Activated T-helper 1 cell treated with anti-CD3 and anti-CD28 coated beads, Interleukin-12 subunit alpha, Interleukin-12 subunit beta, Interleukin-2, Interleukin-4 antibody, amounts not matched to agents 30 ng/mL and 10 ng/mL and 1 ng/mL, durations not matched to agents 14 hours and 24 hours and 36 hours (primary cell): ENCODE measurements at regions of chr22 and their contacts with region 1.

Region 1: GRCh38 chr22:19891317-19892256 is 36.9 kb upstream of the GNB1L start:
- DNase-seq: peak; percentile 58
- H3K4me3 Mint-ChIP-seq: peak overlapping the region; percentile 77
- H3K27ac Mint-ChIP-seq: peak overlapping the region; percentile 95
- H3K4me1 Mint-ChIP-seq: peaks cover 45% of the 10 kb centered on the region
- H3K27me3 Mint-ChIP-seq: no peaks in the 10 kb centered on the region

Region 2: GRCh38 chr22:19143967-19144400 is 747.6 kb before region 1 on chr22:
- intact Hi-C with region 1: loop called (anchors 5 kb)
- DNase-seq: peak; percentile 40
- H3K4me3 Mint-ChIP-seq: peak overlapping the region; percentile 98
- H3K27ac Mint-ChIP-seq: peak overlapping the region; percentile 97
- H3K4me1 Mint-ChIP-seq: peaks cover 23% of the 10 kb centered on the region
- H3K27me3 Mint-ChIP-seq: peaks cover 22% of the 10 kb centered on the region

Region 3: DNA sequence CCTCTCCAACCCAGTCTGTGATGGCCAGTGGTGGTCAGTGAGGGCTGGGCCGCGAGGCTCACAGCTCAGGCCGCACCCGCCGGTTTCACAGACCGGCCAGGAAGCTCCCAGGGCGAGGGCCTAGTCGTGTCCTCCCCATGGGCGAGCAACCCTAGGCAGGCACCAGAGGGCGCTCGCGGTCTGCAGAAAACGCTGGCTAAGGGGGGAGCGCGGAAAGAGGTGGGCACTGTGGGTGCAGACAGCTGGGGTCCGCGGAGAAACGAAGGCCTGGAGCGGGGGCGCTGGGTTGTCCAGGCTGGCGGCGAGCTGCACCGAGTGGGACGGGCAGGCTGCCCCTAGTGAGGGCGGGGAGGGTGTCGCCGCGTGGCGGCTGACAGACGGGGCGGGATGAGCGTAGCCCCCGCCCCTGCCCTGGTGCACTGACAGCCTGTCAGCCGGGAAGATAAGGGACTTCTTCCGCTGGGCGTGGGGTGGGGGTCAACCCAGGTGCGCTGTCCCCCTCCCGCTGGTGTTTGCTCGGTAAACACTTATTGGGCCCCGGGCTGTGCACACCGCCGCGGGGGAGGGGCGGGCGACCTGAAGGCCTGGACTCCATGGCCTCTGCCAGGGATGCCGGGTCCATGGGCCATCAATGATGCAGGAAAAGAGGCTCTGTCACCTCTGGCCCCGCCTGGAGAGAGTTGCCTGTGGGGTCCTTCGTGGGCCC is 160.8 kb before region 1 on chr22:
- intact Hi-C with region 1: loop called (anchors 5 kb)
- DNase-seq: peak; percentile 65
- H3K4me3 Mint-ChIP-seq: peak overlapping the region; percentile 43
- H3K27ac Mint-ChIP-seq: no peak overlapping the region
- H3K4me1 Mint-ChIP-seq: no peaks in the 10 kb centered on the region
- H3K27me3 Mint-ChIP-seq: no peaks in the 10 kb centered on the region

Region 4: DNA sequence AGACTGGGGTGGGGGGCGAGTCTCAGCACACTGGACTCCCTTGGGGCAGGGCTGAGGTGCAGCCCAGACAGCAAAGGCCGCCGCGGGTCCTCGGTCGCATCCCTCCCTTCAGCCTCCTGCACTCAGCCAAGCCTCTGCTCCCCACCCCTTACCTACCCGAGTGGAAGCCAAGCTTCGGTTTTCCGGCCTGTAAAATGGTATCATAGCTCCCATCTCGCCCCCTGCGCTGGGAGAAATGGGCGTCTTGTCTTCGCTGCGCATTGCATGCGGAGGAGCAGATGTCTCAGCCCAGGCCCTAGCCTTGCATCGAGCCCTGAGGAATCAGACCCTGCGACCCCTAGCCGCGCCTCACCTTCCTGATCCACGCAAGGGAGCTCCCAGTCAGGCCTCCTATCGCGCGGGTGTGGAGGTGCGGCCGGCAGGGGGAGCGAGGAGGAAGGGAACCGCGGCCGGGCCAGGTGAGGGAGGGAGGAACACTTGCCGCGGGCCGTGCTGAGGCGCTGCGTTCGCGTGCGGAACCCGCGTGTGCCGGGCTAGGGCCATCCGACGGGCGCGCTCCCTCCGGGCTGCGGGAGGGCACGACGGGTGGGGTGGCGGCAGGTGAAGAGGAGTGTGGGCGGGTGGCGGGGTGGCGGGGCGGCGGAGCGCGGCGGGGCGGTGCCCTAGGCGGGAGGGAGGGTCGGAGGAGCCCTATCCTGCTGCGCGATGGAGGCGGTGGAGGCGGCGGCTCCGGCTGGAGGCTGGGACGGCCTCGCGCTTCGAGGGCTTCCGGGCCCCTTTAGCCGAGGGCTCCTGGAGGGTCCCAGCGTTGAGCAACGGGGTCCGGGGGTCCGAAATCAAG is 135.1 kb before region 1 on chr22:
- intact Hi-C with region 1: loop called (anchors 5 kb)
- DNase-seq: peak; percentile 61
- H3K4me3 Mint-ChIP-seq: peak overlapping the region; percentile 2
- H3K27ac Mint-ChIP-seq: no peak overlapping the region
- H3K4me1 Mint-ChIP-seq: peaks cover 17% of the 10 kb centered on the region
- H3K27me3 Mint-ChIP-seq: peaks cover 56% of the 10 kb centered on the region

Region 5: DNA sequence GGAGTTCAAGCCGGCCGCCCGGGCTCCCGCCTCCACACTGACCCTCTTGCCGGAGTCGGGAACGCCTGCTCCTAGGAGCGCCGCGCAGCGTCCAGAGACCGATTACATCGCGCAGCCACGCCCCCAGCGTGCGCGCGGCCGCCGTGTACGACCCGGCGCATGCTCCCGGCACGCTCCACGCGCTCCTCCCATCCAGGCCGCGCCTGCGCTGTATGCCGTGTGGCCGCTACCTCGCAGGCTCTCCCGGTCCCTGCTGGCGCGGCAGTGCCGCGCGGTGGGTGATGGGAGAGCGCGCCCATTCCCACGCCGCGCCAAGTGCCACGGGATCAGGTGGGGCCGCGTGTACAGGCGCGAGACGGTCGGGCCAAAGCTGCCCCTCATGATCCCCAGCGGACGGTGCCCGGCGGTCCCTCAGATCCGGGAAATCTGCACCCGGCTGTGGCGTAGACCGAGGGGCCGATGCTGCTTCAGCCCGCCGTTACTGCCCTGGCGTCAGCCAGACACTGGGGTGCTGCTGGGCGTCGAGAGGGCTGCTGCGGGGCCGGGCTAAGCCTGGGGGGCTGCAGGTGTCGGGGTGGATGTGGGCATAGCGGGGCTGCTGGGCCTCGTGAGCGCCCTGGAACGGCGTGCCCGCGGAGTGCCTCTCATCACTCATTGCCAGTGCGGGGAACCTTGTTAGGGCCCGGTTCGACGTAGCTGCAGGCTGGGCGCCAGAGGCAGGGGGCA is 36.6 kb before region 1 on chr22 and contains the starts of genes GNB1L and RTL10:
- intact Hi-C with region 1: loop called (anchors 1 kb)
- DNase-seq: peak; percentile 97
- H3K4me3 Mint-ChIP-seq: peak within 1 kb of the TSS; percentile 98
- H3K27ac Mint-ChIP-seq: peak within 1 kb of the TSS; percentile 91
- H3K4me1 Mint-ChIP-seq: peaks cover 40% of the 10 kb centered on the region
- H3K27me3 Mint-ChIP-seq: no peaks in the 10 kb centered on the region
- total RNA-seq, gene GNB1L: 20.6 and 21.5 TPM in 2 replicates
- total RNA-seq, gene RTL10: 22.2 and 24.1 TPM in 2 replicates

Region 6: GRCh38 chr22:19909350-19910179 is 18.0 kb after region 1 on chr22:
- intact Hi-C with region 1: loop called (anchors 1 kb)
- DNase-seq: peak; percentile 62
- H3K4me3 Mint-ChIP-seq: no peak overlapping the region
- H3K27ac Mint-ChIP-seq: peak overlapping the region; percentile 20
- H3K4me1 Mint-ChIP-seq: peaks cover 6% of the 10 kb centered on the region
- H3K27me3 Mint-ChIP-seq: no peaks in the 10 kb centered on the region

Region 7: DNA sequence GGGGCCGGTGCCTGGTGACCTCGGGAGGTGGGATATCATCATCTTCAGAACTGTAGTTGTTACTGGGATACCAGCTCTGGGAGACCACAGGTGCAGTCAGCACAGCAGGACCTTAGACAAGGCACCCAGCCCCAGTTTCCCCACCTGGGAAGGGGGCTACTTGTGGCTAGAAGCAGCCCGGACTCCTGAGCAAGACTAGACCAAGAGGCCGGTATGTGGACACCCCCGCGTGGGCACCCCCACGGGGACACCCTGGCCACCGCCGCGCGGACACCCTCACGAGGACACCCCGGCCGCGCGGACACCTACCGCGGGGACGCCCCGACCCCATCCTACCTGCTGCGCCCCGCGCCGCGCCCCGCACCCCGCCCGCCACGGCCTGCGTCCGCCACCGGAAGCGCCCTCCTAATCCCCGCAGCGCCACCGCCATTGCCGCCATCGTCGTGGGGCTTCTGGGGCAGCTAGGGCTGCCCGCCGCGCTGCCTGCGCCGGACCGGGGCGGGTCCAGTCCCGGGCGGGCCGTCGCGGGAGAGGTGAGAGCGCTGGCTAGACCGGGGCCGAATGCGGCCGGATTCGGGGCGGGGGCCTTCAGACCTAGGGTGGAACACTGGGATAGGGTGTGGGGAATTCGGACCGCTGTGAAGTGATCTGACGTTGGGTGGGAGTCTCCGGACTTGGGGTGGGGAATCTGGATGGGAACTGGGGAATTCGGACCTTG is 49.9 kb after region 1 on chr22 and contains the starts of genes COMT and TXNRD2:
- intact Hi-C with region 1: loop called (anchors 5 kb)
- DNase-seq: peak; percentile 67
- H3K4me3 Mint-ChIP-seq: peak within 1 kb of the TSS; percentile 98
- H3K27ac Mint-ChIP-seq: peak within 1 kb of the TSS; percentile 93
- H3K4me1 Mint-ChIP-seq: peaks cover 27% of the 10 kb centered on the region
- H3K27me3 Mint-ChIP-seq: peaks cover 1% of the 10 kb centered on the region
- total RNA-seq, gene COMT: 99.4 and 112 TPM in 2 replicates
- total RNA-seq, gene TXNRD2: 19.0 and 20.0 TPM in 2 replicates

Region 8: GRCh38 chr22:20141186-20142077 is 249.8 kb after region 1 on chr22:
- intact Hi-C with region 1: no loop called
- DNase-seq: no peak
- H3K4me3 Mint-ChIP-seq: no peak overlapping the region
- H3K27ac Mint-ChIP-seq: no peak overlapping the region
- H3K4me1 Mint-ChIP-seq: no peaks in the 10 kb centered on the region
- H3K27me3 Mint-ChIP-seq: no peaks in the 10 kb centered on the region